MCF 10A (cell line): ENCODE measurements at regions of chr18 and their contacts with region 1.

Region 1: GRCh38 chr18:54742659-54743604 is 85.3 kb upstream of the RAB27B start:
- DNase-seq: peak; percentile 99
- H3K4me3 Mint-ChIP-seq: no peak overlapping the region
- H3K27ac Mint-ChIP-seq: peak overlapping the region; percentile 69
- H3K4me1 Mint-ChIP-seq: peaks cover 45% of the 10 kb centered on the region
- H3K27me3 Mint-ChIP-seq: no peaks in the 10 kb centered on the region
- CTCF ChIP-seq: no peak

Region 2: DNA sequence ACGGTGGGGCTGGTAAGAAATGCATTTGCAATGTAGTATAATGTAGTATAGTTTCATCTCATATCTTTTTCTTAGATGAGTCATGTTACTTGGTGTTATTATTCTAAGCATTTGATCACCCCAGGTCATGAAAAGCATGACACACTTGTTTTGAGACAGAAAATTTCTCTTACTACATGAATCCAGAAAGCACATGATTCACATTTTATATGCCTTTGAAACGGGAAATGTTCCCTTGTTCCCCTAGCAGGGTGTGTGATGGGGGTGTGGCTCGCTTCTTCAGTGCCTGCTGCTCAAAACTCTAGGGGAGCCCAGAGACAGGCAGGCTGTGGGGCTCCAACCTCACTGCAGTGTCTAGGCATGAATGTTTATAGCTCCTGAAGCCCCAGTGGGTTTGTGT is 30.6 kb before region 1 on chr18:
- CTCF ChIA-PET with region 1: interaction called, 6 read pairs
- POLR2A ChIA-PET with region 1: interaction called, 7 read pairs
- intact Hi-C with region 1: loop called (anchors 1 kb)
- DNase-seq: peak; percentile 90
- H3K4me3 Mint-ChIP-seq: no peak overlapping the region
- H3K27ac Mint-ChIP-seq: peak overlapping the region; percentile 14
- H3K4me1 Mint-ChIP-seq: peaks cover 23% of the 10 kb centered on the region
- H3K27me3 Mint-ChIP-seq: no peaks in the 10 kb centered on the region
- CTCF ChIP-seq: no peak